GM12878 (cell line): ENCODE measurements at regions of chr1 and their contacts with region 1.

Region 1: GRCh38 chr1:171741872-171742576 is at the start of gene VAMP4:
- DNase-seq: peak; percentile 59
- ATAC-seq: peak; percentile 95
- H3K4me3 ChIP-seq: peak within 1 kb of the TSS; percentile 83
- H3K27ac ChIP-seq: peak within 1 kb of the TSS; percentile 92
- H3K4me1 ChIP-seq: peaks cover 4% of the 10 kb centered on the region
- H3K27me3 ChIP-seq: no peaks in the 10 kb centered on the region
- CTCF ChIP-seq: no peak
- EP300 ChIP-seq: no peak
- POLR2A ChIP-seq: peak; percentile 91
- RAD21 ChIP-seq: no peak
- polyA plus RNA-seq, gene VAMP4: 0.90 to 1.5 TPM

Region 2: DNA sequence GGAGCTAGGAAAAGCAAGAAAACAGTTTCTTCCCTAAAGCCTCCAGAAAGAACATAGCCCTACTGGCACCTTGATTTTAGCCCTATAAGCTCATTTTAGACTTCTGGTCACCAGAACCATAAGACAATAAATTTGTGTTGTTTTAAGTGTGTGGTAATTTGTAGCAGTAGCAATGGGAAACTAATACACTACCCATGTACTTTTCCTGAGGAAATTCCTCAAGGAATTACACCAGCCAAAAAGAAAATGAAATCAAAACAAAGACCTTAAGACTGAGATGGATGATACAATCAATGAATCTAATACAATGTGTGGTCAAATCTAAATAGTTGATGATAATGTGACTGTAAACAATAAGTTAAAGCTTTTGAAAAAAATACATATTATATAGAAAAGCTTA is 12.0 kb before region 1 on chr1:
- CTCF ChIA-PET with region 1: interaction called, 3 read pairs
- POLR2A ChIA-PET with region 1: interaction called, 3 read pairs
- RAD21 ChIA-PET with region 1: no interaction called
- SMC1A ChIA-PET with region 1: interaction called, 27 read pairs
- in situ Hi-C with region 1: no loop called
- intact Hi-C with region 1: no loop called
- DNase-seq: no peak
- ATAC-seq: no peak
- H3K4me3 ChIP-seq: no peak overlapping the region
- H3K27ac ChIP-seq: no peak overlapping the region
- H3K4me1 ChIP-seq: no peaks in the 10 kb centered on the region
- H3K27me3 ChIP-seq: no peaks in the 10 kb centered on the region
- CTCF ChIP-seq: no peak
- EP300 ChIP-seq: no peak
- POLR2A ChIP-seq: no peak
- RAD21 ChIP-seq: no peak